CD4-positive, alpha-beta memory T cell (primary cell): ENCODE measurements at regions of chr5 and their contacts with region 1.

Region 1: DNA sequence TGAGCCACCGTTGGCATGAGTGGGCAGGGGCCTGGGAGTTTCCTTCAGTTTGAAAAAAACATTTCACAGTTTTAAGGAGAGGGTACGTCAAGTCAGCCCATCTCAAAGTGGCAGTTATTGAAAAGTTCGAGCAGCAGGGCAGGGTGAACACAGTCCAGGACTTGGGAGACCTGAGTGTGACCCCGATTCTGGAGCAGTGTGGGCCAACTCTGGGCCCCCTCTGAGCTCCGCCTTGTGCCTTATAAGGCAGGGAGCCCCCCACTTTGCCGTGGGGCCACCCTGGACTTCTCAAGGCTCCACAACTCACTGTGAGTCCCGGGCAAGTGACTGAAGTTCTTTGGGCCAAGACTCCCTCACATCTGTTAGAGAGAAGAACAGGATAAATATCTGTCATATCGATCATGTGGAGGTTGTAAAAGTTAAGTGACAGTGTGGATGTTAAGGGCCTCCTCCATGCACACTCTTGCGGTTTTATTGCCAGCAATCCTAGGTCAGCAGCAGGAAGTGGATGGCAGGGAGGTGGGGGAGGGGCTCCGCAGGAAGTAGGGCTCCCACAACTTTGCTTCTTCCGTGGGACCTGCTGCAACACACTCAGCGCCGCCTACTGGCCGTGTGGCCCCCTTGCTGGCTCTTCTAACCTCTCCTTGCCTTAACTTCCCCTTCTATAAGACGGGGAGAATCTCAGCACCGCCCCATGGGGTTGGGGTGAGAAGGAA is 38.4 kb downstream of the HRH2 start:
- DNase-seq: peak; percentile 65 to 70 (median 66)
- H3K4me3 ChIP-seq: no peak overlapping the region
- H3K4me3 Mint-ChIP-seq: peak overlapping the region; percentile 15 to 76 (median 64)
- H3K27ac ChIP-seq: no peak overlapping the region
- H3K27ac Mint-ChIP-seq: peak overlapping the region; percentile 73 to 91 (median 83)
- H3K4me1 ChIP-seq: peaks cover 16% of the 10 kb centered on the region
- H3K4me1 Mint-ChIP-seq: peaks cover 13 to 34% (median 23%) of the 10 kb centered on the region in 4 donors
- H3K27me3 ChIP-seq: no peaks in the 10 kb centered on the region
- H3K27me3 Mint-ChIP-seq: no peaks in the 10 kb centered on the region

Region 2: GRCh38 chr5:175335691-175336090 is 360.6 kb before region 1 on chr5:
- CTCF ChIA-PET with region 1: no interaction called
- POLR2A ChIA-PET with region 1: no interaction called
- intact Hi-C with region 1: no loop called
- DNase-seq: no peak
- H3K4me3 ChIP-seq: no peak overlapping the region
- H3K4me3 Mint-ChIP-seq: no peak overlapping the region
- H3K27ac ChIP-seq: no peak overlapping the region
- H3K27ac Mint-ChIP-seq: no peak overlapping the region
- H3K4me1 ChIP-seq: no peaks in the 10 kb centered on the region
- H3K4me1 Mint-ChIP-seq: no peaks in the 10 kb centered on the region
- H3K27me3 ChIP-seq: no peaks in the 10 kb centered on the region
- H3K27me3 Mint-ChIP-seq: peaks cover 2 to 7% of the 10 kb centered on the region in 2 donors

Region 3: GRCh38 chr5:175657593-175658271 is 38.6 kb before region 1 on chr5 and contains the start of gene HRH2:
- CTCF ChIA-PET with region 1: interaction called, 4 read pairs
- POLR2A ChIA-PET with region 1: no interaction called
- intact Hi-C with region 1: loop called (anchors 1 kb)
- DNase-seq: peak; percentile 33 to 47 (median 37)
- H3K4me3 ChIP-seq: peak within 1 kb of the TSS; percentile 73 to 82
- H3K4me3 Mint-ChIP-seq: peak within 1 kb of the TSS; percentile 91 to 97 (median 96)
- H3K27ac ChIP-seq: peak within 1 kb of the TSS; percentile 34
- H3K27ac Mint-ChIP-seq: peak within 1 kb of the TSS; percentile 61 to 95 (median 88)
- H3K4me1 ChIP-seq: peaks cover 74% of the 10 kb centered on the region
- H3K4me1 Mint-ChIP-seq: peaks cover 65 to 94% (median 79%) of the 10 kb centered on the region in 4 donors
- H3K27me3 ChIP-seq: no peaks in the 10 kb centered on the region
- H3K27me3 Mint-ChIP-seq: no peaks in the 10 kb centered on the region
- total RNA-seq, gene HRH2: 4.0 to 4.2 TPM

Region 4: GRCh38 chr5:175718401-175719108 is 22.3 kb after region 1 on chr5:
- CTCF ChIA-PET with region 1: interaction called, 30 read pairs
- POLR2A ChIA-PET with region 1: no interaction called
- intact Hi-C with region 1: no loop called
- DNase-seq: peak; percentile 33 to 47 (median 42)
- H3K4me3 ChIP-seq: no peak overlapping the region
- H3K4me3 Mint-ChIP-seq: no peak overlapping the region
- H3K27ac ChIP-seq: no peak overlapping the region
- H3K27ac Mint-ChIP-seq: no peak overlapping the region
- H3K4me1 ChIP-seq: no peaks in the 10 kb centered on the region
- H3K4me1 Mint-ChIP-seq: peaks cover 0 to 1% (median 0%) of the 10 kb centered on the region in 4 donors
- H3K27me3 ChIP-seq: no peaks in the 10 kb centered on the region
- H3K27me3 Mint-ChIP-seq: peaks cover 0 to 2% of the 10 kb centered on the region in 2 donors